SK-N-SH (cell line): ENCODE measurements at regions of chr22 and their contacts with region 1.

Region 1: DNA sequence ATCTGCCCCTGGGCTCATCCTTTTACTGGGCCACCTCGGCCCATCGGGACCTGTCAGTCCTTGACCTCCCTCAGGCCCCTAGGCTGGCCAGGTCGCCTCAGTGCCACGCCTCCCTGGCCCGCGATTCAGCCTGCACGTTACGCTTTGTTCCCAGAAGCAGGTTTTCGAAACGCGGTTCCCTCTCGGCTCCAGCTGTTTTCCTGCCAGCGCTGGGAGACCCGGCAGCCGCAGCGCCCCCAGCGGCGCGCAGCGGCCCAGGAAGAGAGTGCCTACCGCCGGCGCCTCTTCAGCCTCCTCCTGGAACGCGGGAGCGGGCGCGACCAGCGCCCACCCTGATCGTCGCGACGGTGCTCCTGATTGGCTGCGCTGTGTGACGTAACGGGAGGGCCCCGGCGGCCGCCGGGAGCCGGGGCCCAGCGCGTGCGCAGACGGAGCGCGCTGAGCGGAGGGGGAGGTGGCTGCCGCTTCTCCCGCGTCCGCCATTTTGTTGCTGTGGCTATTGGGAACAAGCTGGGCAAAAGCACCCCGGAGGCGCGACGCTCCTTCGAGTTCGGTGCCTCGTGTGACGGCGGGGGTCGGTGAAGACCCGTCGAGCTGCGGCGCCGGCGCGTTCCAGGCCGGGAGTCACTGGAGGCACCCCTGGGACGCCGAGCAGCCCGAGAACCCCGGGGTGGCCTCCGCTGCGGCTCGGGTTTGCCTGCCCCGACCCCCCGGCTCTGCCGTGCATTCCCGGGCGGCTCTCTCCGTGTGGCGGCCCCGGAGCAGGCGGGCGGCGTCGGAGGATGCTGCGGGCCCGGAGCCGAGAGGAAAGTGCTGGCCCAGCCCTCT is at the start of gene CRKL:
- DNase-seq: peak; percentile 100
- H3K4me3 ChIP-seq: peak within 1 kb of the TSS; percentile 86 to 98
- H3K27ac ChIP-seq: peak within 1 kb of the TSS; percentile 86 to 93
- H3K4me1 ChIP-seq: peaks cover 7 to 10% of the 10 kb centered on the region in 2 experiments; a peak in 3 of 4 replicates
- H3K27me3 ChIP-seq: no peaks in the 10 kb centered on the region
- CTCF ChIP-seq: peak; percentile 93
- EP300 ChIP-seq: no peak
- RAD21 ChIP-seq: peak; percentile 59
- polyA plus RNA-seq, gene CRKL: 9.6 and 10.2 TPM in 2 replicates

Region 2: DNA sequence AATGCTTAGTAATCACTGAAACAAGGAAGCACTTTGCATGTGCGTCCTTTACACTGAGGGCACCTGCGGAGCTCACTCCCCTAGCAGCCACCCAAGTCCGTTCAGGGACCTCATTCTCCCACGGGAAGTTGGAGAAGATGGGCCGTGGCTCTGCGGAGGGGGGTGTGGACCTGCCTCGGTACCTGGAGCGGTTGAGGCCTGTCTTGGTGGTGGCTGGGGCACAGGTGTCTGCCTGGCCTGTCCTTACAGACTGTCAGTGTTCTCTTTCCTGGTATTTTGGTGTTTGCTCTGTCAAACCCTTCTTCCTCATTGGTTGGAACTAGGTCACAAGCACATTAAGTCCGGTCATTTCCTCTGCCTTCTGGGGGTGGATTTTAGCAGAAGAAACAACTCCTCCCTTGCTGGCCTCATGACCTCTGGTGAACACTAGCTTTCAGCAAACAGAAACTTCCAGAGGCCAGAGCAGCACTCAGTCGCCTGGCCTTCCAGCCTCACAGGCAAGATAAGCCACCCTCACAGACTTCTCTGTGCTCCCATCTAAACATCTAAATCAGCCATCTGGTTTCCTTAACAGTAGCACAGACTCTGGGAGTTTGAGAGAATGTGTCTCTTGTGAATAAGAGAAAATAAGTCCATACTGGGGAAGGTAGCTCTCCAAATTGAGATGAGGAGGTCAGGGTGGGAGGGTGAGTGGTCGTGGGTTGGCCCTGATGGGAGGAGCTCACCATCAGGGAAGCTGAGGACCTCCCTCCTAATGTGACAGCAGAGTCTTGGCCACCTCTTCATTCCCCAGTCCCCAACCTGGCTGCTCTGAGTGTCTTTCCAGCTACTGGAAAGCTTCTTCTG is 49.8 kb before region 1 on chr22:
- CTCF ChIA-PET with region 1: interaction called, 16 read pairs
- POLR2A ChIA-PET with region 1: no interaction called
- DNase-seq: peak; percentile 77
- H3K4me3 ChIP-seq: no peak overlapping the region
- H3K27ac ChIP-seq: peak overlapping the region in 1 of 2 experiments; percentile 94; a peak in 2 of 4 replicates
- H3K4me1 ChIP-seq: peaks cover 0 to 37% of the 10 kb centered on the region in 2 experiments; a peak in 2 of 4 replicates
- H3K27me3 ChIP-seq: no peaks in the 10 kb centered on the region
- CTCF ChIP-seq: no peak
- EP300 ChIP-seq: peak in 1 of 2 experiments; percentile 73; a peak in 1 of 4 replicates
- RAD21 ChIP-seq: no peak

Region 3: DNA sequence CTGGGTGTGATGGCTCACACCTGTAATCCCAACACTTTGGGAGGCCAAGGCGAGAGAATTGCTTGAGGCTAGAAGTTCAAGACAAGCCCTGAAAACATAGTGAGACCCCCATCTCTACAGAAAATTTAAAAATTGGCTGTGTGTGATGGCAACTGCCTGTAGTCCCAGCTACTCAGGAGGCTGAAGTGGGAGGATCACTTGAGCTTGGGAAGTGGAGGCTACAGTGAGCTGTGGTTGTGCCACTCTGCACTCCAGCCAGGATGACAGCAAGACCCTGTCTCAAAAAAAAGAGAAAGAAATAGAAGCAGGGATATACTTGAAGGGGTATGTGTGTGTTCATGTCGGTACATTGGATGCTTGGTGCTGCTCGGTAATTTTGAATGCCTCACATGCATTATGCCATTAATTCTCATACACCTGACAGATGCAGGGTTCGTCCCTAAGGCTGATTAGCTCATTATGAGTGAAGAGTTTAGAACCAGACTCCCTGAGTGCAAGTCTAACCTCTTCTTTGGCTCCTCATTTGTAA is 14.0 kb after region 1 on chr22:
- CTCF ChIA-PET with region 1: interaction called, 18 read pairs
- POLR2A ChIA-PET with region 1: no interaction called
- DNase-seq: no peak
- H3K4me3 ChIP-seq: no peak overlapping the region
- H3K27ac ChIP-seq: no peak overlapping the region
- H3K4me1 ChIP-seq: peaks cover 0 to 1% of the 10 kb centered on the region in 2 experiments; a peak in 1 of 4 replicates
- H3K27me3 ChIP-seq: no peaks in the 10 kb centered on the region
- CTCF ChIP-seq: no peak
- EP300 ChIP-seq: no peak
- RAD21 ChIP-seq: no peak

Region 4: GRCh38 chr22:20937031-20937793 is 20.0 kb after region 1 on chr22:
- CTCF ChIA-PET with region 1: interaction called, 18 read pairs
- POLR2A ChIA-PET with region 1: interaction called, 3 read pairs
- DNase-seq: no peak
- H3K4me3 ChIP-seq: no peak overlapping the region
- H3K27ac ChIP-seq: no peak overlapping the region
- H3K4me1 ChIP-seq: peaks cover 5 to 13% of the 10 kb centered on the region in 2 experiments; a peak in 2 of 4 replicates
- H3K27me3 ChIP-seq: no peaks in the 10 kb centered on the region
- CTCF ChIP-seq: no peak
- EP300 ChIP-seq: no peak
- RAD21 ChIP-seq: no peak